ENCODE measurements at regions of chr6 and their contacts with region 1.

Region 1: GRCh38 chr6:138115877-138116660 is 8.8 kb upstream of the PERP start:
- DNase-seq: peak; percentile 34 to 81 (median 58)

Region 2: GRCh38 chr6:138001750-138002349 is 114.2 kb before region 1 on chr6:
- intact Hi-C with region 1: loop called (anchors 5 kb)
- DNase-seq: peak; percentile 29 to 87 (median 66)

Region 3: GRCh38 chr6:138157986-138158638 is 42.0 kb after region 1 on chr6:
- intact Hi-C with region 1: no loop called
- DNase-seq: peak in 1 of 42 donors; percentile 8

Region 4: GRCh38 chr6:138211027-138211581 is 95.0 kb after region 1 on chr6:
- intact Hi-C with region 1: loop called (anchors 5 kb)
- DNase-seq: peak in 23 of 42 donors; percentile 20 to 77 (median 47)

Region 5: GRCh38 chr6:138278326-138278725 is 162.3 kb after region 1 on chr6:
- intact Hi-C with region 1: loop called (anchors 5 kb)
- DNase-seq: peak; percentile 42 to 88 (median 74)

Region 6: GRCh38 chr6:138403801-138404661 is 288.0 kb after region 1 on chr6 and contains the start of gene HEBP2:
- intact Hi-C with region 1: loop called (anchors 10 kb)
- DNase-seq: peak; percentile 39 to 88 (median 77)

Region 7: GRCh38 chr6:138545621-138545980 is 429.5 kb after region 1 on chr6:
- intact Hi-C with region 1: no loop called
- DNase-seq: peak in 6 of 42 donors; percentile 7 to 22 (median 19)

Region 8: GRCh38 chr6:138588805-138589434 is 472.9 kb after region 1 on chr6:
- intact Hi-C with region 1: loop called (anchors 10 kb)
- DNase-seq: peak in 40 of 42 donors; percentile 30 to 85 (median 64)